ENCODE measurements at regions of chr6 and their contacts with region 1.

Region 1: GRCh38 chr6:106512048-106512967 is 117.0 kb downstream of the RTN4IP1 start:
- DNase-seq: peak; percentile 84
- H3K4me3 ChIP-seq: peak overlapping the region; percentile 84
- H3K27ac ChIP-seq: peak overlapping the region; percentile 88
- H3K4me1 ChIP-seq: peaks cover 41% of the 10 kb centered on the region
- CTCF ChIP-seq: peak; percentile 53

Region 2: DNA sequence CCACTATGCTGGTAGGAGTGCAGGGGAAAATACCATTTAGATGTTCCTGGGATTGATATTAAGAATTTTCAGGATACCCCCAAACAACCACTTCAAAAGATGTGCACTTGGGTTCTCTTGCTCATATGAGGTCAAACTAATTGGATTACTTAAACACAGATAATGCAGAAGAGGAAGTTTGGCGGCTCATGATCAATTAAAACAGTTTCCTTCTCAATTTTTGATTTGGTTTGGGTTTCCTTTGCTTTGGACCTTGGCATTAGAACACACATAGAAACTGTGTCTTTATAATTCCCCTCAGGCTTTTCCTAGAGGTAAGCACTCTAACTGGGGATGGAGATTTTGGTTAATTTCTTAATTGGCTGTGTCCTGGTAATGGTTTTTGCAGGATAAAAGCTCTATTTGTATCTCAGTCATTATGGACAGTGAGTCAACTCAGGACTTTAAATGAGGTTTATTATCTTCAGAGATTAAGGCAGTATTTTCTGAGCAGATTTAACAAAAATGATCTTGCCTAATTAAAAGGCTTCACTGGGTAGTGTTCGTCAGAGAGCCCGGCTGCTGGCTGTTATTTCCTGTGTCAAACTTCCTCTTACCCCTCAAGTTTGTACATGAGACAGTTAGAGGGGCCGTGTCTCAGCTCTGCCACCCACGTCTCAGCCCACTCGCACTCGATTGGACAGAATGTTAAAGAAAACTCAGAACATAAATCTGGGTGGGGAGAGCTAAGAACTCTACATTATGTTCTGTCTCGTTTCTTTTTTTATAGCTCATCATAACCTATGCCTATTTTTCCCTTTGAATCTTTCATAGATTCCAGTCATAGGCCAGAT is 1059.2 kb before region 1 on chr6:
- CTCF ChIA-PET with region 1: no interaction called
- POLR2A ChIA-PET with region 1: no interaction called
- intact Hi-C with region 1: no loop called
- DNase-seq: peak; percentile 22
- H3K4me3 ChIP-seq: no peak overlapping the region
- H3K27ac ChIP-seq: no peak overlapping the region
- H3K4me1 ChIP-seq: no peaks in the 10 kb centered on the region
- CTCF ChIP-seq: no peak

Region 3: DNA sequence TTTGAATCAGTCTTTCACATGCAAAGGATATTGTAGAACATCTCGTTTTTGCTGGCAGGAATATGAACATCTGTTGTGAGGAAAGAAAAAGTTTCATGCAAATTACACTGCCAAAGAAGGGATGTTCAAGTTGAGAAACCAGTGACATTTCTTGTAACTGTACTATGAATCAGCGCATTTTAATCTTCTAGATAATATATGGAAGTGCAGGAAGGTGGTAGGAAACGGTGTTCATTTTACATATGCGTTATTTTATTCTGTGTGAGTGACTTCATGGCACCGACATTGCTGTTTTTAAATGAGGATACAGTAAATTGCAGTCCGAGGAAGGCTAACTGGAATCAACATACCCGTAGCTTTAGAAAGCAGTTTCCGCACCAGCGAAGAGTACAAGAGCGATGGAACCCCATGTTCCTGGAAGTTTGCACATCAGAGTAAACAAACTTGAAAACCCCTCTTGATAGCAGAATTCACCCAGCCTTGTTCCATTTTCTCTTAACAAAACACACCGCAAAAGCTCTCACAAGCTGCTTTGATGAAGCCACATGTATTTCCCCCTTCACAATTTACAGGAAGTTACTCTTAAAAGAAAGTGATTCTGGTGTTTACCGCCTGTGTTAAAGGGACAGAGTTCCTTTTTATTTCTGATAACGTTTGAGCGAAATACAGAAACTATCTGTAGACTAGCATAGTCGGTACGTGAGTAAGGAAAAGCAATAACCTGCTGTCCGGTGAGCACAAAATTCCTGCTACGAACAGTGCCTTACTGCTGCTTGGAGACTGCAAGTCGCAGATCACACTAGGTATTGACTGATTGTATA is 414.7 kb before region 1 on chr6:
- CTCF ChIA-PET with region 1: no interaction called
- POLR2A ChIA-PET with region 1: no interaction called
- intact Hi-C with region 1: loop called (anchors 10 kb)
- DNase-seq: peak; percentile 77
- H3K4me3 ChIP-seq: peak overlapping the region; percentile 69
- H3K27ac ChIP-seq: peak overlapping the region; percentile 55
- H3K4me1 ChIP-seq: peaks cover 46% of the 10 kb centered on the region
- CTCF ChIP-seq: no peak

Region 4: DNA sequence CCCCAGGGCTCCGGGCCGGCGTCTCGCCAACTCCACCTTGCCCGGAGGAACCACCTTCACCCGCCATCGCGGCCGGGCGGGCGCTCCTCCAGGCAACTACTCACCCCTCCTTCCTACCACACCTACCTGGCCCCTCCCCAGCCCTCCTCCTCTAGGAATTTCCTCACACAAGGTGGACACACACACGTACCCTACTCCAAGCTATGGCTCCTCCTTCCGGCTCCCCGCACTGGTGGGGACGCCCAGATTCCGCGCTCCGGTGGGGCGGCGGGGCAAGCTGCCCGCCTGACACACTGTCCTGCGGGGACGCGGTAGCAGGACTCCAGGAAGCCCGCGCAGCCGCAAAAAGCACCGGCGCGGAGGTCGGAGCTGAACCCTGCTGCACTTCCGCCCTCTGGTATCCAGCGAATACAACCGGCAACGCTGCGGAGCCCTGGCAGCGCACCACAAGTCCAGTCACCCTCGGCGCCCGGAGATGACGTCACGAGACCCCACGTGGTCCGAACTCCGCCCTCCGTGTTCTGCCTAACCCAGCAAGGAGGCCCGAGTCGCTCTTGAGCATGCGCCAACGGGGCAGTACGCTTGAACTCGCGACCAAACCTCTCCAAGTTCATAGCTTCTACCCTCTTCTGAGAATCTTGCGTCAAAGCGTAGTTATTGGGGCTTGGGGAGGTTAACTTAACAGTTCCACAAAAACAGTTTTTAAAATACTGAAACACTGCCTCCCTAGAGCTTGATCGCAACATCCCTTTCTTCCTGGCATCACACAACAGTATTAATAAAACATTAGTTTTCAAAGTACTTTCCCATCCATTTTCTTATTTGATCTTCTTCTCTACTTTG is 186.8 kb before region 1 on chr6 and contains the start of gene ATG5:
- CTCF ChIA-PET with region 1: no interaction called
- POLR2A ChIA-PET with region 1: no interaction called
- intact Hi-C with region 1: loop called (anchors 5 kb)
- DNase-seq: peak; percentile 99
- H3K4me3 ChIP-seq: peak within 1 kb of the TSS; percentile 84
- H3K27ac ChIP-seq: peak within 1 kb of the TSS; percentile 75
- H3K4me1 ChIP-seq: peaks cover 18% of the 10 kb centered on the region
- CTCF ChIP-seq: no peak
- total RNA-seq, gene ATG5: 18.8 and 20.6 TPM in 2 replicates

Region 5: DNA sequence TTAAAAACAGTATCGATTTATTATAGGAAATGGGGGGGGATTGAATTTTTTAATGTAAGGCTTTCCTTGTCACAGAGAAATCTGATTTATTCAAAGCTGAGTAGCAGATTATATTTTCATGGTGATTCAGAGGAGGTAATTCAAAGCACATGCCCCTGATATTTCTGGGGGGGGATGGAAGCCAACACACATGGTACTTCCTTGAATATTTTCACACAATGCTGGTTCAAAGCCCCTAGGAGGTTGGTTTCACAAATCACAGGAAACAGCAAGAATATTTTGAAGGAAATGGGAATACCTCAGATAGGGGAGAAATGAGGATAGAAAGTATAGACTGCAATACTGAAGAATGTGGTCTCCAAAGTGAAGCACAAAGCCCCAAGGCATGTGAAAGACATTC is 18.2 kb after region 1 on chr6:
- CTCF ChIA-PET with region 1: no interaction called
- POLR2A ChIA-PET with region 1: interaction called, 157 read pairs
- intact Hi-C with region 1: loop called (anchors 2 kb)
- DNase-seq: no peak
- H3K4me3 ChIP-seq: no peak overlapping the region
- H3K27ac ChIP-seq: no peak overlapping the region
- H3K4me1 ChIP-seq: peaks cover 8% of the 10 kb centered on the region
- CTCF ChIP-seq: no peak

Region 6: DNA sequence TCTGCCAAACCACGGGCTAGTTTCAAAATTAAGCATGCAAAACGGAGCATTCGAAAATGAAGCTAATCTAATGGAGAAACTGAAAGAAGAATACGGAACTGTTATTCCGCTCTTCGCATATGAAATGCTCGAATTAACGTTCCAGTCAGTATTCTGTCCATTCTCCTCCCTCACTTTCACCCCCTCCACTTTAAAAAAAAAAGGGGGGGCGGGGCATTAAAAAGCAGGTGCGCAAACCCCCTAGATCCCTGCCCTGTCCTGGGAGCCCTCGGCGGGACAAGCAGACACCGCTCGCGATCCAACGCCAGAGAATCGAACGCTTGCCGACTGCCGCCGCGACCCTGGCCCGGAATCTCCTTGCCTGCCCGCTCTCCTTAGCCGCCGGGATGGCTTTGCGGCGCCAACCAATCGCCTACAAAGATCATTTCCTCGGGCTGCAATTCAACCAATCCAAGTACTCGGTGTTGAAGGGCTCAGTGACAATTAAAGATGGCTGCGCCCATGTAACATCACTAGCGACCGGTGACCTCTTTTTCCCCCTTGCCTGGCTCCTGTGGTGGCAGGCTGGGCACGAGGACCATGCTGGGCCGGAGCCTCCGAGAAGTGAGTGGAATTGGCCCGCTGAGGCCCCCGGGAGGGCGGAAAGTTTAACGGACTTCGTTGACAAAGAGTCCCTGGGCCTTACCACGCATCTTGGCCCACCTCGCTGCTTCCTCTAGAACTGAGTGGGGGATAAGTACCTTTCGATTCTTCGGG is 117.0 kb after region 1 on chr6 and contains the starts of genes QRSL1 and RTN4IP1:
- CTCF ChIA-PET with region 1: no interaction called
- POLR2A ChIA-PET with region 1: interaction called, 6 read pairs
- intact Hi-C with region 1: loop called (anchors 2 kb)
- DNase-seq: peak; percentile 95
- H3K4me3 ChIP-seq: peak within 1 kb of the TSS; percentile 83
- H3K27ac ChIP-seq: peak within 1 kb of the TSS; percentile 98
- H3K4me1 ChIP-seq: peaks cover 54% of the 10 kb centered on the region
- CTCF ChIP-seq: no peak
- total RNA-seq, gene QRSL1: 63.9 and 65.7 TPM in 2 replicates
- total RNA-seq, gene RTN4IP1: 25.2 TPM in 2 replicates

Region 7: DNA sequence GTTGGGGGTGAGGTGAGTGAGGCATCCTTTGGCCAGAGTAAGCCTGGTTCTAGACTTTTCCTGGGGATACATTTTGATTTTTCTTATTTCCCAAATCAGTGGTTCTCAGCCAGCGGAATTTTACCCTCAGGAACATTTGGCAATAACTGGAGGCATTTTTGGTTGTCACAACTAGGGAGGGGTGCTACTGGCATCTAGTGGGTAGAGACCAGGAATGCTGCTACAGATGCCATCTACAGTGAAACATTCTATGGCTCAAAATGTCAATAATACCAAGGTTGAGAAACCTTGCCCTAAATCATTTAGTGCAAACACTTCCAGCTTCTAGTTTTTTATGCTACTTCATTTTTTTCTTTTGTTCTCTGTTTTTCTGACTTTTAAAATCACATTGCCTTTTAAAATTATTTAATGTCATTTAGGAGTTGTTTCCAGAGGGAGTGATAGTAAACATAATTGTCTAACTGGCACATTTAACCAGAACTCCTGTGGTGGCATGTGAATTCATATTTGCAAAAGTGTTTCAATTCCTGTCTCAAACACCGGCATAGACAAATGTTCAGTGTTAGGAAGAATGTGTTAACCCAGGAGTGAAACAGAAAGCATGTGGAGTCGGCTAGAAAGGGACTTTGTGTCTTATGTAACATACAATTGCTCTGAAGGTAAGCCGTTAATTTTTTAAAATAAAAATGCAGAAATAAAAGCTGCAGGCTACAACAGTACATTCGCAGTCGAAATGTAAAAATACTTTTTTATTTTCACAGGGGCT is 176.1 kb after region 1 on chr6:
- CTCF ChIA-PET with region 1: no interaction called
- POLR2A ChIA-PET with region 1: no interaction called
- intact Hi-C with region 1: no loop called
- DNase-seq: peak; percentile 59
- H3K4me3 ChIP-seq: no peak overlapping the region
- H3K27ac ChIP-seq: no peak overlapping the region
- H3K4me1 ChIP-seq: peaks cover 47% of the 10 kb centered on the region
- CTCF ChIP-seq: peak; percentile 79

Region 8: GRCh38 chr6:106702451-106703110 is 190.3 kb after region 1 on chr6:
- CTCF ChIA-PET with region 1: no interaction called
- POLR2A ChIA-PET with region 1: interaction called, 5 read pairs
- intact Hi-C with region 1: loop called (anchors 5 kb)
- DNase-seq: peak; percentile 99
- H3K4me3 ChIP-seq: peak overlapping the region; percentile 61
- H3K27ac ChIP-seq: peak overlapping the region; percentile 99
- H3K4me1 ChIP-seq: peaks cover 65% of the 10 kb centered on the region
- CTCF ChIP-seq: no peak

Region 9: DNA sequence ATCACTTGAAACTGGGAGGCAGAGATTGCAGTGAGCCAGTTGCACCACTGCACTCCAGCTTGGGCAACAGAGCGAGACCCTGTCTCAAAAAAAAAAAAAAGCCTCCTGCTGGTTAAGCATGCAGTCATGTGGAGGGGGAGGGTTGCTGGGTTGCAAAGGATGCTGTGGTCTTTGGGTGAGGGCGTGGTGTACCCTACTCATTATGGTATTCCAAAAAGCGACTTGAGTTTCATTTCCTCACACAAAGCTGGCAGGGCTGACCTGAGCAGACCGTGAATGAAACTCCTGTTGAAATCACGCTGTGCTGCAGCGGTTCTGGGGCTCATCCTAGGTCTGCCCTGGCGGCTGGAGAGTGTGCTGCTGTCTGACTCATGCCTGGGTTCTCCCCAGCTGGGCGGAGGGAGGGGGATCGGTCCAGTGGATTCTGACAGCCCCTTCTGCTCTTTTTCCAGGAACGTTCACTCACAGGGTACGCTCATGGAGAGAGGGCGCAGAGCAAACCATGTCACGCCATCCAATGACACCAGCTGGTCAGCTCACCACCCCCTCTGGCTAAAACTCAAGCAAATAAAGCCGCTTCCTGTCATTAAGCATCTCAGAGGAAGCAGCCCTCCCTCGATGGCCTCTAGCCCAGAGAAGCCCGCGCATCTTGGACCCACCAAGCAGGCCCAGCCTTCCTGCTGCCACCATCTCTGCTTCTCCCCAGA is 1145.6 kb after region 1 on chr6:
- CTCF ChIA-PET with region 1: no interaction called
- POLR2A ChIA-PET with region 1: no interaction called
- intact Hi-C with region 1: loop called (anchors 5 kb)
- DNase-seq: peak; percentile 99
- H3K4me3 ChIP-seq: peak overlapping the region; percentile 74
- H3K27ac ChIP-seq: peak overlapping the region; percentile 98
- H3K4me1 ChIP-seq: peaks cover 70% of the 10 kb centered on the region
- CTCF ChIP-seq: no peak

Measured in OCI-LY7 (cell line).